HEK293 (cell line): ENCODE measurements at regions of chr1 and their contacts with region 1.

Region 1: DNA sequence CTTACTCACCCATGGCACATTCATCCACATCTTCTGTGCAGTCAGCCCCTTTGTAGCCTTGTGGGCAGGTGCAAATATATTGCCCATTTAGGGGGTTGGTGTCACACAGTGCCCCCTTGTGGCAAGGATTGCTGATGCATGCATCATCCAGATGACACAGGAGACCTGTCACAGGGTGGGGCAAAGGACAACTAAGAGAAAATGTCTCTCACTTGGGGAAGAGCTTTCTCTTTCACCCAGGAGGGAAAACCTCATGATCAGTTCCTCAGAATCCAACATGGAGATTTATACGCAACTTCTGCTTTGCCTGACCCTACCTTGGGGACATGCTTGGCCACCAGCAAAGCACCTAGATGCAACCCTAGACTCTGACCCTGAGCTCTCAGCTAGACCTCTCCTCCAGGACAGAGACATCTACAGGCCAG is 71.8 kb upstream of the ADAM30 start:
- H3K4me3 ChIP-seq: no peak overlapping the region
- H3K27ac ChIP-seq: no peak overlapping the region
- H3K4me1 ChIP-seq: no peaks in the 10 kb centered on the region
- CTCF ChIP-seq: peak; percentile 67

Region 2: GRCh38 chr1:119937198-119937597 is 30.9 kb before region 1 on chr1:
- CTCF ChIA-PET with region 1: interaction called, 11 read pairs
- POLR2A ChIA-PET with region 1: no interaction called
- H3K4me3 ChIP-seq: no peak overlapping the region
- H3K27ac ChIP-seq: no peak overlapping the region
- H3K4me1 ChIP-seq: no peaks in the 10 kb centered on the region
- CTCF ChIP-seq: no peak

Region 3: DNA sequence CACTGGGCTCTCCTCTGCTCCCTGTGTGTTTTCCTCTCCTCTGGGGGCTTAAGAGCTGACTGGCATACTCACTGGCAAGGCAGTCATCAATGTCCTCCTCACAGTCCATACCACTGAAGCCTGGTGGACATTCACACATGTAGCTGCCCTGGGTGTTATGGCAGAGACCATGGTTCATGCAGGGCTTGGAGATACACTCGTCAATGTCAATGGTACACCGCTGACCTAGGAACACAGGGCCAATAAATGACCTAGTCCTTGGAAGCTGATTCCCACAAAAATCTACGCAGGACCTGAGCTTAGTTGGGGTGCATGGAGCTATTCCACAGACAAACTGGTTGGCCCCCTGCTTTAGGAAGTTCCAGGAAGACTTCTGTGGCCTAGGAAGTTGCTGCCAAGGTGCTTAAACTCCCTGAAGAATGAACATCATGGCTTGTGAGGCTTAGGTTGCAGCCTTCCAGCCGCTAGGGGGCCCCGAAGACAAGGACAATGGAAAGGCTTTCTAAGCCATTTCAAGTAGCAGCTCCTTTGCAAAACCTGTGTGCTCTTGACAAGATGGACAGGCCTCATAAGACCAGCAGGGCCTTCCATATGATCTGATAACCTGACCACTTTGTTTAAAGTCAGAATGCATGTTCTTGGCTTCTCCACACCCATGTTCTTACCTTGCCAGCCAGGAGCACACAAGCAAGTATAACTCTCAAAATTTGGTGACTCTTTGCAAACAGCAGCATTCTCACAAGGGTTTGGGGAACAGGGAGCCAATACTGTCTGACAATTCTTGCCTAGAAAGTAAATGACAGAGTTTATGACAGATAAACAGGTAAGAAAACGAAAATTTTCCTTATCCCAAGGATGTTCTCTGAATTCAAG is 19.5 kb before region 1 on chr1:
- CTCF ChIA-PET with region 1: interaction called, 36 read pairs
- POLR2A ChIA-PET with region 1: no interaction called
- H3K4me3 ChIP-seq: no peak overlapping the region
- H3K27ac ChIP-seq: no peak overlapping the region
- H3K4me1 ChIP-seq: no peaks in the 10 kb centered on the region
- CTCF ChIP-seq: peak; percentile 64; the same call in 1 of the 2 replicates

Region 4: DNA sequence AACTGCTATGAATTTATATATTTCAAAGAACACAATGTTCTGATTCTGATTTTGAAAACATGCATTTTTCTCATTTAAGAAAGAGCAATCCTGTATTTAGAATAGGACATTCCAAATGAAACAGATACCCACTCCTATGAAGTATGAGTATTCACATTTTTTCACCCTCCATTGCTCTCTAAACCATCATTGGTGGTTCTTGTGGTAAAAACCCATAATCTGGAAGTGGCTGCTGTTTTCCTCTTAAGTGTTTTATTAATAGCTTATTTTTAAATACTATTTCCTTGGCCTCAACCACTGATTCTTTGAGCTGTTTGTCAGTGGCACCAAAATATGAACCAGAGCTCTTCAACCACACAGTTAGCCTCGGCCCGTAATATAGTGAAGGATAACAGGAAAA is 11.8 kb before region 1 on chr1:
- CTCF ChIA-PET with region 1: interaction called, 36 read pairs
- POLR2A ChIA-PET with region 1: no interaction called
- H3K4me3 ChIP-seq: no peak overlapping the region
- H3K27ac ChIP-seq: no peak overlapping the region
- H3K4me1 ChIP-seq: no peaks in the 10 kb centered on the region
- CTCF ChIP-seq: no peak